ENCODE measurements at regions of chr4 and their contacts with region 1.

Region 1: DNA sequence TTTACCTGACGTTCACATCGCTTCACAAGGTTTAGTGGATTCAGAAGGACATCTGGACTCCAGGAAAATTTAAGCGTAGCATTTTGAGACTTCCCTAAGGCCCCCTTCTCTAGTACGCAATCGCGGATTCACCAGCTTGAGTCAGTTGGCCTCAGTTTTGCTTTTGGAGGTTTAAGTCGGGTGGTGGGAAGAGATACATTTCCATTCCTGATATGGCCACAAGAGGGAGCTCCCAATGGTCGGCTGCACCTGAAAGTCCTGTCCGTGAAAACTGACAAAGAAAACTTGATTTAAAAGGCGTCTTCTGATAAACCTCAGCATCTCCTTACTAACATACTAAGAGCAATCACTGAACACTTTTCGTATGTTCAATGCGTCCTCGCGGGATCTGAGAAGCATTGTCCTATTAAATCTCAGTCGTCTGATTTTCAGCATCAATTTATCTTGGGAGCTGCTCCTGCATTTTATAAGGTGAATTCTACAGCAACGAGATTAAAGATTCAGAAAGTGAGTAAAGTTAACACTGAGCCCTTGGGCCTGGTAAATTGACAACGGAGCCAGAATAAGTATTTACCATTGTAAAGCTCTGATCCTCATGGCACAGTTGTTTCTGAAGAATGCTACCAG is 50.6 kb downstream of the LGI2 start:
- DNase-seq: peak in 1 of 2 donors; percentile 75
- H3K4me3 ChIP-seq: peak overlapping the region; percentile 21 to 26
- H3K27ac ChIP-seq: peak overlapping the region; percentile 40 to 61
- H3K4me1 ChIP-seq: peaks cover 0 to 6% of the 10 kb centered on the region in 2 donors
- H3K27me3 ChIP-seq: no peaks in the 10 kb centered on the region
- CTCF ChIP-seq: peak; percentile 71 to 87 (median 80)

Region 2: GRCh38 chr4:24488399-24489164 is 491.6 kb before region 1 on chr4:
- intact Hi-C with region 1: loop called (anchors 5 kb)
- DNase-seq: peak in 1 of 2 donors; percentile 83
- H3K4me3 ChIP-seq: no peak overlapping the region
- H3K27ac ChIP-seq: no peak overlapping the region
- H3K4me1 ChIP-seq: no peaks in the 10 kb centered on the region
- H3K27me3 ChIP-seq: no peaks in the 10 kb centered on the region
- CTCF ChIP-seq: peak; percentile 55 to 82 (median 62)

Region 3: GRCh38 chr4:24686871-24687680 is 293.1 kb before region 1 on chr4:
- intact Hi-C with region 1: loop called (anchors 10 kb)
- DNase-seq: no peak
- H3K4me3 ChIP-seq: no peak overlapping the region
- H3K27ac ChIP-seq: no peak overlapping the region
- H3K4me1 ChIP-seq: no peaks in the 10 kb centered on the region
- H3K27me3 ChIP-seq: no peaks in the 10 kb centered on the region
- CTCF ChIP-seq: peak in 1 of 3 experiments; percentile 29

Region 4: GRCh38 chr4:25060963-25061340 is 80.8 kb after region 1 on chr4:
- intact Hi-C with region 1: loop called (anchors 5 kb)
- DNase-seq: peak in 1 of 2 donors; percentile 58
- H3K4me3 ChIP-seq: no peak overlapping the region
- H3K27ac ChIP-seq: peak overlapping the region; percentile 77
- H3K4me1 ChIP-seq: peaks cover 0 to 7% of the 10 kb centered on the region in 2 donors
- H3K27me3 ChIP-seq: no peaks in the 10 kb centered on the region
- CTCF ChIP-seq: no peak

Region 5: DNA sequence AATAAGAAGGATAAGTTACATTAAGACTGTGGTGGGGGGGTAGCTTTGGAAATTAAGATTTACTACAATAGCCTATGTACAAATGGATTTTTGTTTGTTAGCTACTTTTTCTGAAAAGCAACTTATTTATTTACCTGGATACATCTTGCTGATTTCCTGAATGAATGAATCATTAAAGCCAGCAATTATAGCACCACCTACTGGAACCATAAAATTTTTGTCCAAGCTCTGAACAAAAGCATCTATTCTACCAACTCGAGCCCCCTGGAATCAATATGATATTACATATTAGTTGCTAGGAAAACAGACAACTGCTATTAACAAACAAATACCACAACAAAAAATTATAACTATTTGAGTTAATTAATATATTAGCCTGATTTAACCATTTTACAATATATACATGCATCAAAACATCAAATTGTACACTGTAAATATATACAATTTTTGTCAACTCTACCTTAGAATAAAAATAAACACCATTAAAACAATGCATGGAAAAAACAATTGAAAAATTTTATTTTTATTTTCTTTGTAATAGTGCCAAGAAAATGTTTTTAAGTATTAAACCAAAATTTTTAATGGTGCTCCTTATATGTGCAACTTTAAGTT is 164.8 kb after region 1 on chr4:
- intact Hi-C with region 1: loop called (anchors 5 kb)
- DNase-seq: no peak
- H3K4me3 ChIP-seq: no peak overlapping the region
- H3K27ac ChIP-seq: no peak overlapping the region
- H3K4me1 ChIP-seq: no peaks in the 10 kb centered on the region
- H3K27me3 ChIP-seq: no peaks in the 10 kb centered on the region
- CTCF ChIP-seq: peak; percentile 18 to 56 (median 48)

Measured in ascending aorta (tissue), 2 donors.